PC-9 (cell line): ENCODE measurements at regions of chr10 and their contacts with region 1.

Region 1: GRCh38 chr10:89793649-89794254 is 92.4 kb downstream of the KIF20B start:
- DNase-seq: peak; percentile 25 to 49
- H3K4me3 ChIP-seq: no peak overlapping the region
- H3K27ac ChIP-seq: no peak overlapping the region
- H3K4me1 ChIP-seq: no peaks in the 10 kb centered on the region
- H3K27me3 ChIP-seq: no peaks in the 10 kb centered on the region
- CTCF ChIP-seq: peak; percentile 86

Region 2: GRCh38 chr10:89163265-89163995 is 630.3 kb before region 1 on chr10:
- CTCF ChIA-PET with region 1: no interaction called
- POLR2A ChIA-PET with region 1: no interaction called
- intact Hi-C with region 1: no loop called
- DNase-seq: no peak
- H3K4me3 ChIP-seq: no peak overlapping the region
- H3K27ac ChIP-seq: no peak overlapping the region
- H3K4me1 ChIP-seq: no peaks in the 10 kb centered on the region
- H3K27me3 ChIP-seq: no peaks in the 10 kb centered on the region
- CTCF ChIP-seq: no peak

Region 3: DNA sequence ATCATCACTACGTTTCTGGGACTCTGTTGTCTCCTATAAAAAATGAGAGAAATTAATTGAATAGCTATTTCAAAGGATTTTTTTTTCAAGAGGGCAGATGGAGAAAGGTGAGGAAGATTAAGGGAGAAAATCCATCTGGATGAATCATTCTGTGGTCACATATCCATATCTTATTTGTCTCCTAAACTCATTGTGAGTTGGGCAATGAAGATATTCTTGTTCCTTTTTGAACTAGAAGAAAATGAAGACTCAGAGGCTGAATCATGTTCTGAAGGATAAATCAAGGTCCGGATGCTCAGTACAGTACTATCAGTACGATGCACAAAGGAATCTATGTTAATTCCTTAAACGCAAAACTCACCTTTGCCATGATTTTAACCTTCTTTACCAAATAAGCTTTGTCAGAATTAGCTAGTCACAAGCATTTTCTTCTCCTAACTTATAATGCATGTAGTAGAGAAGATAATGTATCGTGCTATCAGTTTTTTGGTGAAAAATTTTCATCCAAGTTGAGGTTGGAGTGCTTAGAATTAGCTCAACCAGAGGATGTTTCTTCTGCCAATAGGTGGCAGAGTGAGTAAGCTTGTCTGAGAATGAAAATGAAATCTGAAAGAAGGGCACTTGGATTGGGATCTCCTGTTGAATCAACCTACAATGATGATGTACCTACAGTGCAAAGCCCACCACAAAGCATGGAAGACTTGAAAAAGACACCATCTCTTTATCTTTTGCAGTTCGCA is 354.5 kb after region 1 on chr10:
- CTCF ChIA-PET with region 1: no interaction called
- POLR2A ChIA-PET with region 1: no interaction called
- intact Hi-C with region 1: loop called (anchors 5 kb)
- DNase-seq: peak in 1 of 2 experiments; percentile 44
- H3K4me3 ChIP-seq: no peak overlapping the region
- H3K27ac ChIP-seq: no peak overlapping the region
- H3K4me1 ChIP-seq: no peaks in the 10 kb centered on the region
- H3K27me3 ChIP-seq: no peaks in the 10 kb centered on the region
- CTCF ChIP-seq: peak; percentile 43; the same call in 1 of the 2 replicates

Region 4: GRCh38 chr10:90592638-90593302 is 799.0 kb after region 1 on chr10:
- CTCF ChIA-PET with region 1: no interaction called
- POLR2A ChIA-PET with region 1: no interaction called
- intact Hi-C with region 1: loop called (anchors 1 kb)
- DNase-seq: peak in 1 of 2 experiments; percentile 63
- H3K4me3 ChIP-seq: no peak overlapping the region
- H3K27ac ChIP-seq: no peak overlapping the region
- H3K4me1 ChIP-seq: no peaks in the 10 kb centered on the region
- H3K27me3 ChIP-seq: no peaks in the 10 kb centered on the region
- CTCF ChIP-seq: peak; percentile 62

Region 5: DNA sequence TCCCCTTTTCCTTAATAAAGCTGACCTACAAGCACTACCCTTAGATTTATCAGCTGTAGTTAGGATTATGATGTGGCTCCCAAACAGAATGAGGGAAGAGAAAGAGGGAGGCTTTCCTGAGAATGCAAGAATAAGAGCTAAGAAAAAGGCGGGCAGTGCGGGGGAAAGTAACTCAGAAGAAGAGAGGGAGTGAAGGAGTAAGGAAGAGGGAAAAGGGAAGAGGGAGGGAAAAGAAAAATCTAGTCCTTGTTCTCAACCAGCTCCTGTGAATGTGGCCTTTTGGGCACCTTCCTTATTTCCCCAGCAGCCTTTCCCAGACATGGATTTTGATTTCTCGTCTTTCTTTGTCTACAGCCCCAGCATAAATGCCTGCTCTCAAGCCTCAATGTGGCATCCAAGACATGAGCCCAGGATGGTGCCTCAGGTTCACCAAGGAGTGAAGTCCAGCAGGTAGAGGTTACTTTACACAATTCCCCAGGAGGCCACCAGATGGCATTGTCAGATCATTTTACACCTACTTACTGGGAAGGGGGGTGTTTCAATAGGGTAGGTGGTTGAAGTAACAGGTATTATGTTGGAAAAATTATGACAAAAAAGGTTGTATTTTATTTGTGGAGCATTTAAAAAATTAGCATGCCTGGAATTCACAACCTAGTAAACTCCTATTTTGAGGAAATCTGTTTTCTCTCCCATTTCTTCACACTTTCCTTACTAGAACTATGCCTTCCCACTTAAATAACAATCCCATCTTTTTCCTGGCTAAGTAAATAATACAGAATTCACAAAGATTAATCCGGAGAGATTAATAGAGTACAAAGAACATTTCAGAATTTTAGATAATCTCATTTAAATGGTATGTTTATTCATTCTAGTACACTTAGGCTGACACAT is 957.6 kb after region 1 on chr10:
- CTCF ChIA-PET with region 1: no interaction called
- POLR2A ChIA-PET with region 1: no interaction called
- intact Hi-C with region 1: loop called (anchors 1 kb)
- DNase-seq: peak; percentile 37 to 43
- H3K4me3 ChIP-seq: no peak overlapping the region
- H3K27ac ChIP-seq: no peak overlapping the region
- H3K4me1 ChIP-seq: peaks cover 8% of the 10 kb centered on the region
- H3K27me3 ChIP-seq: no peaks in the 10 kb centered on the region
- CTCF ChIP-seq: peak; percentile 87

Region 6: GRCh38 chr10:90862908-90863514 is 1069.3 kb after region 1 on chr10:
- CTCF ChIA-PET with region 1: interaction called, 4 read pairs
- POLR2A ChIA-PET with region 1: no interaction called
- intact Hi-C with region 1: loop called (anchors 1 kb)
- DNase-seq: no peak
- H3K4me3 ChIP-seq: no peak overlapping the region
- H3K27ac ChIP-seq: no peak overlapping the region
- H3K4me1 ChIP-seq: peaks cover 16% of the 10 kb centered on the region
- H3K27me3 ChIP-seq: no peaks in the 10 kb centered on the region
- CTCF ChIP-seq: peak; percentile 77